ENCODE measurements at regions of chr9 and their contacts with region 1.

Region 1: DNA sequence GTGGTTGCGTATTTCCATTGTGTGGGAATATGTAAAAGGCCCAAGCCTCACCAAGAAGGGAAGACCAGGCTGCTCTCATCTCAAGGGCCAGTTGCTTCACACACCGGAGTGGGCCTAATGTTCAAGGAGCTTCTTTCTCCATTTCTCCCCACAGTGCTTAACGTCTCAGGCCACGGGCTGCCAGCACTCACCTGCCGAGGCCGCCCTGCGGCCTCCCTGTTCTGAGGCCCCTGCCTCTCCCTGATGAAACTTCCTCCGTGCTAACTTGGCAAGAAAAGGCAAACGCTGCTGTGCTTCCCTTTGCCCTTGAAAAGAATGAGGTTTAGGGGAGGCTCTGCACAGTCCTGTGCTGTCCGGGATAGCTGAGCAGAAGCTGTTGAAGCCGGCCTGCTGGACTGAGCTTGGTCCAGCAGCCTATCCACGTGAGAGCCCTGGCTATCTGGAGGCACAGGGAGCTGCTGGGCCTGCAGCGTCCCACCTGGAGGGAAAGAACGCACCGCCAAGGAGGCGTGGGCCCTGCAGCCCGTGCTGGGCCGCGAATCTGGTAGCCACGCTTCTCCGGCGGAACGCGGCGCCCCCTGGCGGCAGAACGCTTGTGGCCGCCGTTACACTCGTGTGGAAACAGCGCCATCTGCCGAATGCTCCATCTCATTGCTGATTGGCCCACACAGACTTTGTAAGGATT is 73.5 kb upstream of the PRSS3 start:
- DNase-seq: peak; percentile 66 to 91
- ATAC-seq: peak; percentile 86 to 87
- H3K4me3 ChIP-seq: no peak overlapping the region
- H3K27ac ChIP-seq: peak overlapping the region; percentile 50 to 75; a peak in 4 of 6 replicates
- H3K4me1 ChIP-seq: peaks cover 7% of the 10 kb centered on the region; the same call in 1 of the 3 replicates
- CTCF ChIP-seq: peak; percentile 100
- EP300 ChIP-seq: no peak
- POLR2A ChIP-seq: no peak
- RAD21 ChIP-seq: peak; percentile 100

Region 2: DNA sequence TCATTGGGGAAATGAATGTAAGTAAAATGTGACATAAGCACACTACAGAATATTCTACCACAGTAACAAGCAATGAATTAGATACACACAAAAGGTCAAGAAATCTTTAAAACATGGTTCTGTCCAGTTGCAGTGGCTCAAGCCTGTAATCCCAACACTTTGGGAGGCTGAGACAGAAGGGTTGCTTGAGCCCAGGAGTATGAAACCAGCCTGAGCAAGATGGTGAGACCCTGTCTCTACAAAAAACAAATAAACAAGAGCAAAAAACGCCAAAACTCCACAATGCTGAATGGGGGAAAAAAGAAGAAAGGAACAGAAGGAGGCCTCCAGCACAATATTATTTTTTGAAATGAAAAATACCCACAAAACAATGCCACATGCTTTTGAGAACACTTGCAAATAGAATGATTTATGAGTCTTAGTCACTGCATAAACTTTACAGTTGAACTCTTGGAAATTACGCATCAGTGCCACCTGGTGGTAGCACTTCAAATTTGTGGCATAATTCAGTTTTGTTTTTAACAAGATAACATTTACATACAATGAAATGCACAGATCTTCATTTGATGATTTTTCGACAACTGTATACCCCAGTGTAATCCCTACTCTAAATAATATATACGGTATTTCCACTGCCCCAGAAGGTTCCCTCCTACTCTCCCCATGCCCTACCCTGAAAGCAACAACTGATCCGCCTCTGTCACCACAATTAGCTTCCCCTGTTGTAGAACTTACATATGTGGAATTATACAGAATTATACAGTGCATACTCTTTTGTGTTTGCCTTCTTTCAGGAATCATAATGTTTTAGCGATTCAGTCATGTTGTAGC is 496.3 kb before region 1 on chr9:
- CTCF ChIA-PET with region 1: interaction called, 33 read pairs
- POLR2A ChIA-PET with region 1: no interaction called
- DNase-seq: peak in 1 of 2 experiments; percentile 83
- ATAC-seq: 0 out of 6 replicates have a peak, but pooled peaks of 1 of the 2 experiments have one; percentile 8
- H3K4me3 ChIP-seq: no peak overlapping the region
- H3K27ac ChIP-seq: peak overlapping the region; percentile 46 to 67
- H3K4me1 ChIP-seq: peaks cover 54% of the 10 kb centered on the region
- CTCF ChIP-seq: peak; percentile 95
- EP300 ChIP-seq: no peak
- POLR2A ChIP-seq: no peak
- RAD21 ChIP-seq: peak; percentile 94 to 96

Region 3: DNA sequence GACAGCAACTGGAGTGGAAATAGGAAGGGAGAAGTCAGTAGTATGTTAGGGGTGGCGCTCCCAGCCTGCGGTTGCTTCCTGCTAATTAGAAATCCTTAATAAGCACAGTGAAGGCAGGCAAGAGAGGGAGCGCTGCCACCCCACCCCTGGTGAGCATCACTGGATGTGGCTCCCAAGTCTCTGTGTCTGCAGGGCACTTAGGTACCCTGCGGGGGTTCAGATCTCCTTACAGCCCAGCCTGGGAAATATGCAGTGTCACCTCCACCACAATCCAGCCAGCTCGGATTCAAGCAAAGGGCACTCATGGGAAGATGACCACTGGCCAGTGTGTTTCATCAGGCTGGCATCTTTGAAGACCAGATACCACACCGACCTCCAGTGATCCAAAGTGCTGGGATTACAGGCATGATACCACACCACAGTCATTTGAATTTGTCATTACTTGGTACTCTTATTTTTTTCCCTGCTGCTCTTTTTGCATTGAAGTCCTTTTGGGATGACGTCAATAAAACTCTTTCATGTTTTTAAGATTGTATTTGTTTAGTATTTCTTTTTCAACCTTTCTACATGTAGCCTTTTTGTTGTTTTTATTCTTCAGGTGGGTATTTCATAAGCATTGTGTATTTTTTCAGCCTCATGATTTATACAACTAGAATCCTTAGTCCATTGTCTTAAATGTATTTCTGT is 107.7 kb before region 1 on chr9:
- CTCF ChIA-PET with region 1: interaction called, 471 read pairs
- POLR2A ChIA-PET with region 1: no interaction called
- DNase-seq: no peak
- ATAC-seq: no peak
- H3K4me3 ChIP-seq: no peak overlapping the region
- H3K27ac ChIP-seq: no peak overlapping the region
- H3K4me1 ChIP-seq: peaks cover 2% of the 10 kb centered on the region
- CTCF ChIP-seq: no peak
- EP300 ChIP-seq: no peak
- POLR2A ChIP-seq: no peak
- RAD21 ChIP-seq: no peak

Region 4: GRCh38 chr9:33628865-33629410 is 92.9 kb before region 1 on chr9:
- CTCF ChIA-PET with region 1: interaction called, 471 read pairs
- POLR2A ChIA-PET with region 1: interaction called, 4 read pairs
- DNase-seq: no peak
- ATAC-seq: peak; percentile 28 to 46; a peak in 4 of 6 replicates
- H3K4me3 ChIP-seq: no peak overlapping the region
- H3K27ac ChIP-seq: no peak overlapping the region
- H3K4me1 ChIP-seq: no peaks in the 10 kb centered on the region
- CTCF ChIP-seq: no peak
- EP300 ChIP-seq: no peak
- POLR2A ChIP-seq: no peak
- RAD21 ChIP-seq: no peak

Region 5: DNA sequence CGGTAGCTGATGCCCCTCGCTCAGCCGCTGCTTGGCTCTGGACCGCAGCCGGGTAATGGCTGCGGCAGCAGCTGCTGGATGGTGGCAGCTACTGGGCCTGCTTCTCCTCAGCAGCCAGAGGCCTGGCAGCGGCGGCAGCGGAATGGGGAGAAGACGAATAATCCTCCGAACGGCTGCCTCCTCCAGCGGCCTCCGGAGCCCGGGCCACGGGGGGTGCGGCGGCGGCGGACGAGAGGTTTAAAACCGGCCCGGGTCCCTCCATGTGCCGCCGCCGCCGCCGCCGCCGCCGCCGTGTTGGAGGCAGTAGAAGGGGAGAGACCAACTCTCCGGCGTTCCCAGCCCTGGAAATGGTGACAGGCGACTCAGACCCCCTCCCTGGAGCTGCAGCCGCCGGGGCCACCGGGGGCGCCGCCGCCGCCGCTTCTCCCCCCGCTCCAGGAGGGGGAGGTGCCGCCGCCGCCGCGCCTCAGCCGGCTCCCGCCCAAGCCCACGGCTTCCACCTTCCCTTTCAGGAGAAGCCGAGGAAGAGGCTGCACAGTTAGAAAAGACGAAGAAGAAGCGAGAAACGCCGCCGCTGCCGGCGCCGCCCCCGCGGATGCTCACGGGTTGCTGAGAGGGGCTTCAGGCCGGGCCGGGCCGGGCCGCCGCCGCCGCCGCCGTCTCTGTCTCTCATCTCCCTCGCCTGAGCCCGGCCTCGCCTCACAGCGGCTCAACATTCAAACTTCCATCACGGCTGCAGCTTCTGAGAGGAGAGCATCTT is 44.9 kb before region 1 on chr9:
- CTCF ChIA-PET with region 1: interaction called, 15 read pairs
- POLR2A ChIA-PET with region 1: no interaction called
- DNase-seq: peak; percentile 29 to 60
- ATAC-seq: peak; percentile 94 to 95
- H3K4me3 ChIP-seq: peak overlapping the region; percentile 62
- H3K27ac ChIP-seq: peak overlapping the region; percentile 94 to 99
- H3K4me1 ChIP-seq: peaks cover 8% of the 10 kb centered on the region; the same call in 2 of the 3 replicates
- CTCF ChIP-seq: no peak
- EP300 ChIP-seq: no peak
- POLR2A ChIP-seq: peak; percentile 45
- RAD21 ChIP-seq: no peak

Region 6: DNA sequence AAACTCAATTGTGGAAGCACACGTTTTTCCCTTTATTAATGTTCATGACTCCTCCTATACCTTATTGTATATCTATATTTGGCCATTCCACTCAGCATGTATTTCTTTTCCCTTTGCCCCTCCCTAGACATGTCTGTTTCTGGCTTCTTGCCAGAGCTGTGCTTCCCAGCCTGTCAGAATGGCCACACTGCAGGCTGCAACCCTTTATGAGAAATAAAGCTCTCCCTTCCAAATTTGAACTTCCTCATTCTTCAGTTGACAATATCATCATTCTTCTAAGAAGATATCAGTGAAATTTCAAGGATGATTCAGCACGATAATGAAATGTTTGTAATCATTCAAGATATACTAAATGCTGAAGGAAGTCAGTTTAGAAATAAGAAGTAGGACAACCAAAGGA is 34.0 kb before region 1 on chr9:
- CTCF ChIA-PET with region 1: interaction called, 15 read pairs
- POLR2A ChIA-PET with region 1: no interaction called
- DNase-seq: peak in 1 of 2 experiments; percentile 26
- ATAC-seq: peak in 1 of 2 experiments; percentile 33; a peak in 1 of 6 replicates
- H3K4me3 ChIP-seq: no peak overlapping the region
- H3K27ac ChIP-seq: no peak overlapping the region
- H3K4me1 ChIP-seq: peaks cover 11% of the 10 kb centered on the region
- CTCF ChIP-seq: no peak
- EP300 ChIP-seq: no peak
- POLR2A ChIP-seq: no peak
- RAD21 ChIP-seq: no peak

Region 7: DNA sequence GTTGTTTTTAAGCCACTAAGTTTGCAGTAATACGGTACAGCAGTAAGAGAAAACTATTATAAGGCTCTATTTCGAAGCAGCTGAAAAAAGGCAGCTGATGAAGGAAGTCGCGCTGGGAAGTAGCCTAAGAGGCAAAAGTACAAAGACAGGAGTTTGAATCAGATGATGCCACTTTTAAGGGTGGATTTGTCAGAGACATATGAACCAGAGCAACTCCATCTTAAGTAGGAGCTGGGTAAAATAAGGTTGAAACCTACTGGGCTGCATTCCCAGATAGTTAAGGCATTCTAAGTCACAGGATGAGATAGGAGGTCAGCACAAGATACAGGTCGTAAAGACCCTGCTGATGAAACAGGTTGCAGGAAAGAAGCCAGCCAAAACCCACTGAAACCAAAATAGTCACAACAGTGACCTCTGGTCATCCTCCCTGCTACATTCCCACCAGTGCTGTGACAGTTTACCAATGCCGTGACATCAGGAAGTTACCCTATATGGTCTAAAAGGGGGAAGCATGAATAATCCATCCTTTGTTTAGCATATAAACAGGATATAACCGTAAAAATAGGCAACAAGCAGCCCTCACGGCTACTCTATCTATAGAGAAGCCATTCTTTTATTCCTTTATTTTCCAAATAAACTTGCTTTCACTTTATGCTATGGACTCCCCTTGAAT is 18.2 kb before region 1 on chr9:
- CTCF ChIA-PET with region 1: interaction called, 29 read pairs
- POLR2A ChIA-PET with region 1: no interaction called
- DNase-seq: no peak
- ATAC-seq: no peak
- H3K4me3 ChIP-seq: no peak overlapping the region
- H3K27ac ChIP-seq: no peak overlapping the region
- H3K4me1 ChIP-seq: no peaks in the 10 kb centered on the region
- CTCF ChIP-seq: no peak
- EP300 ChIP-seq: no peak
- POLR2A ChIP-seq: no peak
- RAD21 ChIP-seq: no peak